ENCODE measurements at regions of chr3 and their contacts with region 1.

Region 1: GRCh38 chr3:8501371-8502131 is at the start of gene LMCD1:
- DNase-seq: peak; percentile 96 to 98
- H3K4me3 ChIP-seq: peak within 1 kb of the TSS; percentile 59
- H3K4me3 Mint-ChIP-seq: peak within 1 kb of the TSS; percentile 94
- H3K27ac Mint-ChIP-seq: peak within 1 kb of the TSS; percentile 99
- H3K4me1 ChIP-seq: peaks cover 67% of the 10 kb centered on the region
- H3K4me1 Mint-ChIP-seq: peaks cover 52% of the 10 kb centered on the region
- H3K27me3 ChIP-seq: no peaks in the 10 kb centered on the region
- H3K27me3 Mint-ChIP-seq: no peaks in the 10 kb centered on the region
- CTCF ChIP-seq: peak in 1 of 2 experiments; percentile 7
- total RNA-seq, gene LMCD1: 23.9 and 24.7 TPM in 2 replicates

Region 2: GRCh38 chr3:8490079-8490552 is 11.4 kb before region 1 on chr3:
- CTCF ChIA-PET with region 1: interaction called, 8 read pairs
- POLR2A ChIA-PET with region 1: interaction called, 14 read pairs
- intact Hi-C with region 1: loop called (anchors 1 kb)
- DNase-seq: peak; percentile 37 to 52
- H3K4me3 ChIP-seq: no peak overlapping the region
- H3K4me3 Mint-ChIP-seq: no peak overlapping the region
- H3K27ac Mint-ChIP-seq: no peak overlapping the region
- H3K4me1 ChIP-seq: peaks cover 82% of the 10 kb centered on the region
- H3K4me1 Mint-ChIP-seq: peaks cover 54% of the 10 kb centered on the region
- H3K27me3 ChIP-seq: no peaks in the 10 kb centered on the region
- H3K27me3 Mint-ChIP-seq: no peaks in the 10 kb centered on the region
- CTCF ChIP-seq: no peak

Region 3: GRCh38 chr3:8607234-8608040 is 105.9 kb after region 1 on chr3:
- CTCF ChIA-PET with region 1: interaction called, 7 read pairs
- POLR2A ChIA-PET with region 1: no interaction called
- intact Hi-C with region 1: loop called (anchors 1 kb)
- DNase-seq: peak; percentile 69 to 73
- H3K4me3 ChIP-seq: no peak overlapping the region
- H3K4me3 Mint-ChIP-seq: no peak overlapping the region
- H3K27ac Mint-ChIP-seq: no peak overlapping the region
- H3K4me1 ChIP-seq: peaks cover 12% of the 10 kb centered on the region; the same call in 1 of the 2 replicates
- H3K4me1 Mint-ChIP-seq: no peaks in the 10 kb centered on the region
- H3K27me3 ChIP-seq: no peaks in the 10 kb centered on the region
- H3K27me3 Mint-ChIP-seq: no peaks in the 10 kb centered on the region
- CTCF ChIP-seq: peak; percentile 52 to 69

Region 4: DNA sequence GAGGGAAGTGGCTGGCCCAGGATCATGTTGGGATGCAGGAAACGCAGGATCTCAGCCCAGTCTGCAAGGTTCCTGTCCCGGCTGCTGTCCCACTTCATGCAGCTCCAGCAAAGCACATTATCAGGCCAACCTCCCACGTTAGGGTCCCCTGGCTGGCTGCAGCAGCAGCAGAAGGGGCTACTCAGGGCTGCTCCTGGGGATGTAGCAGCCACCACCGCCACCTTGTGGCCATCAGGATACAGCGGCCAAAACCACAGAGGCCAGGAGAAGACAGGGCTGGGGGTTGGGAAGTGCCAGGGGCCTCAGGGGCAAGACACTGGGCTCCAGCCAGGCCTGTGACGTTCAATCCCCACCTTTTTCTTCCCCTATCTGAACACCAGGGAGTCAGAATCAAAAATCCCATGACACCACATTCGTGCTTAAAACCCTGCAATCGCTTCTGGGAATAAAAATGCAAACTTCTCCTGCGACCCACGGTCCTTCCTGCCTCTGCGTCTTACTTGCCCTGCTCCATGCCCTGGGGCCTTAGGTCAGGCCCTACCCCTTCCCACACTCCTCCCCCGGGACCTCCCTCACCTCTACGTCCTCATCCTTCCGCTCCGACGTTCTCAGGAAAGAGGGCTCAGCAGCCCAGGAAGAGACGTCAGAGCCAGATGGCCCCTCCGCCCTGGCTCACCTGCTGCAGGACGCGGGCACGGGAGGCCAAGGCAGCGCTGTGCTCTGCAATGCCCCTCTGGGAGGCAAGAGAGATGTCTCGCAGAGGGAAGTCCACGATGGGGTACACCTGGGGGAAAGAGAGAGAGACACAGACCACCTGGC is 121.5 kb after region 1 on chr3:
- CTCF ChIA-PET with region 1: no interaction called
- POLR2A ChIA-PET with region 1: no interaction called
- intact Hi-C with region 1: loop called (anchors 2 kb)
- DNase-seq: peak; percentile 70 to 78
- H3K4me3 ChIP-seq: no peak overlapping the region
- H3K4me3 Mint-ChIP-seq: no peak overlapping the region
- H3K27ac Mint-ChIP-seq: peak overlapping the region; percentile 55
- H3K4me1 ChIP-seq: peaks cover 7% of the 10 kb centered on the region; the same call in 1 of the 2 replicates
- H3K4me1 Mint-ChIP-seq: peaks cover 7% of the 10 kb centered on the region
- H3K27me3 ChIP-seq: no peaks in the 10 kb centered on the region
- H3K27me3 Mint-ChIP-seq: no peaks in the 10 kb centered on the region
- CTCF ChIP-seq: peak; percentile 88

Measured in Caco-2 (cell line).